ENCODE measurements at regions of chr10 and their contacts with region 1.

Region 1: DNA sequence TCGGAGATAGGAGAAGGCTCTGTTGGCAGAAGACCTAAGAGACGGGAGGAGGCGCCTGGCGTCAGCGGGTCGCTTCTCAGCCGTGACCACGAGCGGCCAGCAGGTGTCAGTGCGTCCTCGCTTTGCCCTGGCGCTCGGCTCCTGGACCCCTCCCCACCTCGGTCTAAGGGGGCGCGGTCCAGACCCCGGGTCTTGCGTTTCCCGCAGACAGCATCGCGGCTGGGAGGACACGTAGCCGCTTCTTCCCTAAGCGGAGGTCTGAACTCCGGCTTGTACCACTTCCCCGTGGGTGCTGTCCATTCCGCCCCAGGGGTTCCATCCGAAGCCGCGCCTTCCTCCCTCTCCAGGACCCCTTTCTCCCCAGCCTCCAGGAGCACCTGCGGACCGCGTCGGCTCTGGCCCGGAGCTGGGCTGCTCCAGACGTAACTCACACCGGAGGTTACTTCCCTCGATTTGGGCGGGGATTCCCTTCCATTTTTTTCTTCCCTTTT is 593 bp upstream of the ADRA2A start:
- DNase-seq: peak; percentile 92
- ATAC-seq: peak; percentile 82
- H3K4me3 Mint-ChIP-seq: peak overlapping the region; percentile 72
- H3K27ac Mint-ChIP-seq: no peak overlapping the region
- H3K4me1 Mint-ChIP-seq: peaks cover 10% of the 10 kb centered on the region
- H3K27me3 Mint-ChIP-seq: peaks cover 55% of the 10 kb centered on the region
- CTCF ChIP-seq: peak; percentile 66; the same call in 1 of the 2 replicates

Region 2: DNA sequence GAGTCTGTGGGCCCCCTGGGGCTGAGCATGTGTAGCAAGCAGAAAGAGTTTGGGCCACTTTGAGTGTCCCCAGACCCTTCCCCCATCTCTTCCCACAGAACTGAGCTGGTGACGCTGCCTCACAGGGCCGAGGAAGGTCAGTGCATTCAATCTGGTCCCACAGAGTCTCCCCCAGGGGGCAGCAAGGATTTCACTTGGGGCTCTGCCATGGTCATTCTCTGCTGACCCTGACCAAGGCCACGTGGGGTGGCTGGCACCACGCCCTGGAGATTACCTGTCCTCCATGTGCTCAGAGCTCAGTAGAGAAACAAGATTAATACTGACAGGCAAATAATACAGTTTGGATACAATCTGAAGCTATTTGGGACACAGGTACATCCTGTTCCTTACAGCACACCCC is 30.8 kb after region 1 on chr10:
- CTCF ChIA-PET with region 1: interaction called, 10 read pairs
- POLR2A ChIA-PET with region 1: interaction called, 3 read pairs
- DNase-seq: peak; percentile 37
- ATAC-seq: peak; percentile 69
- H3K4me3 Mint-ChIP-seq: no peak overlapping the region
- H3K27ac Mint-ChIP-seq: no peak overlapping the region
- H3K4me1 Mint-ChIP-seq: peaks cover 3% of the 10 kb centered on the region
- H3K27me3 Mint-ChIP-seq: no peaks in the 10 kb centered on the region; the same call in 1 of the 2 replicates
- CTCF ChIP-seq: no peak

Region 3: GRCh38 chr10:111171183-111171582 is 94.9 kb after region 1 on chr10:
- CTCF ChIA-PET with region 1: no interaction called
- POLR2A ChIA-PET with region 1: no interaction called
- DNase-seq: no peak
- ATAC-seq: no peak
- H3K4me3 Mint-ChIP-seq: no peak overlapping the region
- H3K27ac Mint-ChIP-seq: no peak overlapping the region
- H3K4me1 Mint-ChIP-seq: no peaks in the 10 kb centered on the region
- H3K27me3 Mint-ChIP-seq: no peaks in the 10 kb centered on the region
- CTCF ChIP-seq: no peak

Region 4: GRCh38 chr10:111207500-111207899 is 131.3 kb after region 1 on chr10:
- CTCF ChIA-PET with region 1: interaction called, 43 read pairs
- POLR2A ChIA-PET with region 1: no interaction called
- DNase-seq: peak; percentile 42
- ATAC-seq: peak; percentile 44; the same call in 1 of the 2 replicates
- H3K4me3 Mint-ChIP-seq: no peak overlapping the region
- H3K27ac Mint-ChIP-seq: no peak overlapping the region
- H3K4me1 Mint-ChIP-seq: peaks cover 8% of the 10 kb centered on the region
- H3K27me3 Mint-ChIP-seq: no peaks in the 10 kb centered on the region
- CTCF ChIP-seq: 0 out of 2 replicates have a peak, but pooled peaks have one; percentile 18

Region 5: GRCh38 chr10:111323389-111323966 is 247.2 kb after region 1 on chr10:
- CTCF ChIA-PET with region 1: interaction called, 12 read pairs
- POLR2A ChIA-PET with region 1: no interaction called
- DNase-seq: no peak
- ATAC-seq: peak; percentile 56; the same call in 1 of the 2 replicates
- H3K4me3 Mint-ChIP-seq: no peak overlapping the region
- H3K27ac Mint-ChIP-seq: no peak overlapping the region
- H3K4me1 Mint-ChIP-seq: no peaks in the 10 kb centered on the region
- H3K27me3 Mint-ChIP-seq: no peaks in the 10 kb centered on the region
- CTCF ChIP-seq: no peak

Region 6: DNA sequence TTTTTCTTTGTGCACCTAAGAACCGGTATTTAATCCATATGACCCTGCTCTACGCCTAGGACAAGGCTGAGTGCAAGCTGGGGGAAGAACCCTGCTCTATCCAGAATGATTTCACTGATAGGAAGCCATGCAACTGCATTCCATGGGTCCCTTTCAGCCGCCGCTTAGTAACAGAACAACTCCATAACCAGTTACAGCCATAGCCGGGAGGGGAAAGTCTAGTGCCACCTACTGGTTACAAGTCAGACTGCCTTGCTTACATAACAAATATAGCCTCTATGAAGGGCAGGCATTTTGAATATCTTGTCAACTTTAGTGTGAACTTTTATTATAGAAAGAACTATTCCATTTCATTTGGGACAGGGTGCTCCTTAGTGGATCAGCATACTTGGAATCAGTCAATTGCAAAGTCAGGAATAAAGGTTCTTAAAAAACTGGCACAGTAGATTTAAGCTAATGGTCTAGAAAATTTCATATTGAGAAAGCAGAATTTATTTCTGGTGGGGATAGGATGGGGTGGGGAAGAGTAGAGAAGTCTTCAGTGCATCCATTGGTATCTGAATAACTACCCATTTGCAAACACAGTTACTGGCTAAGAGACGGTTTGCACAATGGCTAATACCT is 522.3 kb after region 1 on chr10:
- CTCF ChIA-PET with region 1: interaction called, 14 read pairs
- POLR2A ChIA-PET with region 1: no interaction called
- DNase-seq: peak; percentile 65
- ATAC-seq: peak; percentile 93
- H3K4me3 Mint-ChIP-seq: no peak overlapping the region
- H3K27ac Mint-ChIP-seq: no peak overlapping the region
- H3K4me1 Mint-ChIP-seq: peaks cover 17% of the 10 kb centered on the region
- H3K27me3 Mint-ChIP-seq: no peaks in the 10 kb centered on the region
- CTCF ChIP-seq: peak; percentile 63